ENCODE measurements at regions of chr4 and their contacts with region 1.

Region 1: DNA sequence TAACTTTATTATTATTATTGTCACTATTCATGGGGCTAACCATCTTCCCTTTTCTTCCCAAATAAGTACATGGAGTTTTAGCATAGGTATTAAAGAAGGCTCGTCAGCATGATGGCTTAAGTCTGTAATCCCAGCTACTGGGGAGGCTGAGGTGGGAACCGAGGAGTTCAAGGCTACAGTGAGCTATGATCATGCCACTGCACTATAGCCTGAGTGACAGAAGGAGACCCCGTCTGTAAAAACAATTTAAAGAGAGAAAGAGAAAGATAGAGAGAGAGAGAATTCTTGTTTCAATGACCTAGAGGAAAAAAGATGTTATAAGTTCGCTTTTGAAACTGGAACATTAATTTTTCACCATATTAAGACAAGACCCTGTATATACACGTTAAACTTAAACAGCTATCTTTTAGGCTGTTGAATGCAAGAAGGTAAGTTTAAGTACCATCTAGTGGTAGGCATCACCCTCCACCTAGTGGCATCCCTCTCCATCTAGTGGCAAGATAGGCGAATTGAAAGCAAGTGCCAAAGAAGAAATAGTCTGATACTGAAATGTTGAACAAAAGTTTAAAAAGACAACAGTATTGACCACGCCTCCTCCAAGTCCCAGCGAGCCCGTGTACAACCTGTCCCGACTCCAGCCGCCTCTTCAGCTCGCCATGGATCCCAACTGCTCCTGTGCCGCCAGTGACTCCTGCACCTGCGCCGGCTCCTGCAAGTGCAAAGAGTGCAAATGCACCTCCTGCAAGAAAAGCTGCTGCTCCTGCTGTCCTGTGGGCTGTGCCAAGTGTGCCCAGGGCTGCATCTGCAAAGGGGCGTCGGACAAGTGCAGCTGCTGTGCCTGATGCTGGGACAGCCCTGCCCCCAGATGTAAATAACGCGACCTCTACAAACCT is 26.0 kb upstream of the YTHDC1 start:
- DNase-seq: peak in 34 of 35 experiments; percentile 9 to 78 (median 34)
- ATAC-seq: peak; percentile 75 to 82 (median 76)
- H3K4me3 ChIP-seq: peak overlapping the region; percentile 4 to 44
- H3K4me3 Mint-ChIP-seq: peak overlapping the region; percentile 69 to 75 (median 71)
- H3K27ac ChIP-seq: no peak overlapping the region
- H3K27ac Mint-ChIP-seq: peak overlapping the region in 1 of 2 donors; percentile 49
- H3K4me1 ChIP-seq: peaks cover 0 to 7% of the 10 kb centered on the region in 2 experiments
- H3K4me1 Mint-ChIP-seq: peaks cover 14 to 17% (median 16%) of the 10 kb centered on the region in 3 donors
- H3K27me3 ChIP-seq: peaks cover 2 to 3% of the 10 kb centered on the region in 2 experiments
- H3K27me3 Mint-ChIP-seq: peaks cover under 1 to 3% of the 10 kb centered on the region in 2 donors

Region 2: DNA sequence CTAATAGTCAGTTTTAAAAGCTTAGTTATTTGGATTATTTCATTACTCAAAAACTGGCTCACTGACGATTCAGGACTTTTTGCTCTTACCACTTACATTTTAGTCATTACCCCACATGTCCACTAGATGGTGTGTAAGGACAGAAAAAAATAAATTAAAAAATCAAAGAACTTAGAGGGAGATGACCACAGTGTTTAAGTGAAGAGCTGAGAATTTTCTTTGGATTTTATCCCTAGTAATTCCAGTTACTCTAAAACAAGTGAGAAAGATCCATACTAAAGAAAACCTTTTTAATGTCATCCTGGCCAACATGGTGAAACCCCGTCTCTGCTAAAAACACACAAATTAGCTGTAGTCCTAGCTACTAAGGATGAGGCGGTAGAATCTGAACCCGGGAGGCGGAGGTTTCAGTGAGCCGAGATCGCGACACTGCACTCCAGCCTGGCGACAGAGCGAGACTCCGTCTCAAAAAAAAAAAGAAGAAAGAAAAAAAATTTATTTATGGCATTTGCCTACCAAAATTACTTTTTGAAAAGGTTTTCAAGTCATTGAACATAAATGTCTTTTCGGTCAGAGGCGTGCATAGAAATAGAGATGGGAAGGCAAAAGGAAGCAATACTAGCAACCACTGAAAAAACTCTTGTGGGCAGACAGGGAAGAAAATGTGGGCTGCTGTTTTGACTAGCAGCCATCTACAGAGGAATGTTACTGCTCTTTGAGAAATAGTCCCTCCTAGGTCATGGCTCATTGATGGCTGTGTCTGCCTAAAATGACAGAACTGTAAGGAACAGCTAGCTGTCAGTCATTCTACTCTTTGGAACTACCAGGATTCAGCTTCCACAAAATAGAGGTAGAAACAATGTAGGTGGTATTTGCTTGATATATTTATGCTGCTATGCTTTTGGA is 103.8 kb before region 1 on chr4:
- CTCF ChIA-PET with region 1: interaction called, 26 to 45 read pairs
- POLR2A ChIA-PET with region 1: no interaction called
- DNase-seq: peak in 2 of 35 experiments; percentile 1 to 63
- ATAC-seq: peak; percentile 47 to 64 (median 51)
- H3K4me3 ChIP-seq: no peak overlapping the region
- H3K4me3 Mint-ChIP-seq: peak overlapping the region in 2 of 3 donors; percentile 38 to 47
- H3K27ac ChIP-seq: no peak overlapping the region
- H3K27ac Mint-ChIP-seq: no peak overlapping the region
- H3K4me1 ChIP-seq: no peaks in the 10 kb centered on the region
- H3K4me1 Mint-ChIP-seq: peaks cover 0 to 2% (median 0%) of the 10 kb centered on the region in 3 donors
- H3K27me3 ChIP-seq: peaks cover 0 to 3% of the 10 kb centered on the region in 2 experiments
- H3K27me3 Mint-ChIP-seq: peaks cover 12 to 13% of the 10 kb centered on the region in 2 donors

Region 3: DNA sequence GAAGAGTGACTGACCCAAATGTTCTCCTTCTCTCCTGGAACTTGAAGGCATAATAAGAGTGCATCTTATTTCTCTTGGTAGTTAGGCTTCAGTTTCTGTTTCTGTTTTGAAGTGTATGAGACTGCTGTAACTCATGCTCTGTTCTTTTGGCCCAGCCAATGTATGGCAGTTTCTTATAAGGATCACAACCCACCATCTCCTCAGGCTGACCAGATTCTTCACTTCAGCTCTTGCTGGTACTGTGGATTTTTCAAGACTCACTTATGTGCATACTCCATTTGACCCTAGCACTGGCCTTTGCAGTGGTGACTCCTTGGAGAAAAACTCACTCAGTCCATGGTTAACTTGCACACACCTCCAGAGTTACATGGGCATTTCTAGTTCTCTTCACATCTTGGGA is 16.4 kb before region 1 on chr4:
- CTCF ChIA-PET with region 1: interaction called, 3 to 11 read pairs
- POLR2A ChIA-PET with region 1: no interaction called
- DNase-seq: no peak
- ATAC-seq: peak; percentile 27 to 74 (median 32)
- H3K4me3 ChIP-seq: no peak overlapping the region
- H3K4me3 Mint-ChIP-seq: peak overlapping the region in 1 of 3 donors; percentile 26
- H3K27ac ChIP-seq: no peak overlapping the region
- H3K27ac Mint-ChIP-seq: peak overlapping the region in 1 of 2 donors; percentile 58
- H3K4me1 ChIP-seq: no peaks in the 10 kb centered on the region
- H3K4me1 Mint-ChIP-seq: peaks cover 0 to 10% (median 9%) of the 10 kb centered on the region in 3 donors
- H3K27me3 ChIP-seq: no peaks in the 10 kb centered on the region
- H3K27me3 Mint-ChIP-seq: peaks cover 5 to 6% of the 10 kb centered on the region in 2 donors

Region 4: GRCh38 chr4:68407868-68408190 is 31.9 kb after region 1 on chr4:
- CTCF ChIA-PET with region 1: no interaction called
- POLR2A ChIA-PET with region 1: no interaction called
- DNase-seq: no peak
- ATAC-seq: no peak
- H3K4me3 ChIP-seq: no peak overlapping the region
- H3K4me3 Mint-ChIP-seq: no peak overlapping the region
- H3K27ac ChIP-seq: no peak overlapping the region
- H3K27ac Mint-ChIP-seq: no peak overlapping the region
- H3K4me1 ChIP-seq: no peaks in the 10 kb centered on the region
- H3K4me1 Mint-ChIP-seq: no peaks in the 10 kb centered on the region
- H3K27me3 ChIP-seq: peaks cover 0 to 5% of the 10 kb centered on the region in 2 experiments
- H3K27me3 Mint-ChIP-seq: peaks cover 0 to 6% of the 10 kb centered on the region in 2 donors

Region 5: GRCh38 chr4:68466185-68466584 is 90.3 kb after region 1 on chr4:
- CTCF ChIA-PET with region 1: no interaction called
- POLR2A ChIA-PET with region 1: no interaction called
- DNase-seq: no peak
- ATAC-seq: no peak
- H3K4me3 ChIP-seq: no peak overlapping the region
- H3K4me3 Mint-ChIP-seq: no peak overlapping the region
- H3K27ac ChIP-seq: no peak overlapping the region
- H3K27ac Mint-ChIP-seq: no peak overlapping the region
- H3K4me1 ChIP-seq: no peaks in the 10 kb centered on the region
- H3K4me1 Mint-ChIP-seq: peaks cover 7 to 20% (median 8%) of the 10 kb centered on the region in 3 donors
- H3K27me3 ChIP-seq: no peaks in the 10 kb centered on the region
- H3K27me3 Mint-ChIP-seq: no peaks in the 10 kb centered on the region

Measured in T-cell (primary cell).